SK-N-SH (cell line): ENCODE measurements at regions of chr2 and their contacts with region 1.

Region 1: GRCh38 chr2:60629801-60630385 is 76.4 kb upstream of the BCL11A start:
- DNase-seq: no peak
- H3K4me3 ChIP-seq: no peak overlapping the region
- H3K27ac ChIP-seq: no peak overlapping the region
- H3K4me1 ChIP-seq: peaks cover 0 to 6% of the 10 kb centered on the region in 2 experiments; a peak in 2 of 4 replicates
- H3K27me3 ChIP-seq: no peaks in the 10 kb centered on the region
- CTCF ChIP-seq: no peak
- EP300 ChIP-seq: no peak
- RAD21 ChIP-seq: no peak

Region 2: DNA sequence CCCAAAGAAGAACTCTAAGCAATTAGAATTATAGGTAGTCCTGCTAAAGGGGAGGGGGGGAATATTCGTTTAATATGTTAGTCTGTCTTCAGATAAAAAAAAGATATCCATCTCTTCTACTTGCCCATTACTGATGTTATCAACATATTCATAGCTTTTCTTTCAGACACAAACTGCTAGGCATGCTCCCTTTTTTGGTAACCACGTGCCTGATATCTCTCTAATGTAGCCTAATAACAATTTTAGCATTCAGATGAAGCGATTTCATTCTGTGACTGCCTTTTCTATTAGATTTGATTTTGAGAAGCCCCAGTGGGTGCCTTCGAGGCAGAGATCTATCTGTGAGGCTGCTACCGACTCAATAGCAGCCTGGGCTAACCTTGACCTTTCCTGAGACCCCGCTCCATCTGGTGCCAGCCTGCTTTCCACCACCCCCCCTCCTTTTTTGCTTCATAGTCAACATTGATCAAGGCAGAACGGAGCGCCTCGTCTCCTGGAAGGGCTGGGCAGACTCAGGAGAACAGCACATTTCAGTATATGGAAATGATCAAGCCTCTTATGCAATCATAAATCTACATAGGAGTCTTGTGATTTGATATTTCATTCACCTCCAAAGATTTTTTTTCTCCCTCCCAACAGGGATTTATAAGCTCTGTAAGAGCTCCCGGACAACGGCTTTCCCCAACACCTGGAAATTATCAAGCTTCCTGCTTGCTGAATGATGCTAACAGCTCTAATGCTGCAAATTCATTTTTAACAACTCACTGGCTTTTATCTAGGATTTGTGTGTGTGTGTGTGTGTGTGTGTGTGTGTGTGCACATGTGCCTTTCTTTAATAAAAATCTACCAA is 61.7 kb before region 1 on chr2:
- CTCF ChIA-PET with region 1: no interaction called
- POLR2A ChIA-PET with region 1: no interaction called
- DNase-seq: peak; percentile 54
- H3K4me3 ChIP-seq: no peak overlapping the region
- H3K27ac ChIP-seq: no peak overlapping the region
- H3K4me1 ChIP-seq: peaks cover 0 to 7% of the 10 kb centered on the region in 2 experiments; a peak in 2 of 4 replicates
- H3K27me3 ChIP-seq: peaks cover 41% of the 10 kb centered on the region
- CTCF ChIP-seq: no peak
- EP300 ChIP-seq: no peak
- RAD21 ChIP-seq: no peak

Region 3: DNA sequence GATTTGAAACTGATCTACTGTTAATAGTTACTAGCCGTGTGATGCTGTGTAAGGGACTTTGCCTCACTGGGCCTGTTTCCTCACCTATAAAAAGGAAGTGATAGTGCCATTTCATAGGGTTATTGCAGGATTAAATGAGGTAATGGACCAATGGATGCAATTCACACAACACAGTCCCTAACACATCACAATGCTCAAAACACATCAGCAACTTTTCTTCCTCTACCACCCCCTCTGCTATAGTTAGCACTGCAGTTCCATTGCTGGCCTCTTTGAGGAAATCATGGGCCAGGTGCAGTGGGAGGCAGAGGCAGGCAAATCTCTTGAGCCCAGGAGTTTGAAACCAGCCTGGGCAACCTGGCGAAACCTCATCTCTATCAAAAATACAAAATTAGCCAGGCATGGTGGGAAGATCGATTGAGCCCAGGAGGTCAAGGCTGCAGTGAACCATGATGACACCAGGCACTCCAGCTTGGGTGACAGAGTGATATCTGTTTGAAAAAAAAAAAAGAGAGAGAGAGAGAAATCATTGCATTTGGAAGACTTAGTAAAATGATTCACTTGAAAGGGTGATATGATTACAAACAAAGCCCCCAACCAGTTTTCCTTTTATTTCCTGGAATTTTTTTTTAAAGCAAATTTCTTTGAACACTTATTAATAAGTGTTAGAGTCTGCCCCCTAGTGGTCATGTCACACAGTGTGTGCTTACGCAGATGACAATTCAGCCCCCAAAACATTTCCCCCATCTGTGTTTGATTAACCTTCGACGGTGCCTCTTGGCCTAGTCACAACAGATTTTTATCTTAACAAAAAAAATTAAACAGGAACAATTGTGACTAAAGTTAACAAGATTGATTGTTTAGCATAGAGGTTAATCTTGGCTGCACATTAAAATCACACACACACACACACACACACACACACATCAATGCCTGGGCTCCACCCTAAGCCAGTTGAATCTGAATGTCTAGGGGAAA is 12.2 kb after region 1 on chr2:
- CTCF ChIA-PET with region 1: interaction called, 23 read pairs
- POLR2A ChIA-PET with region 1: no interaction called
- DNase-seq: peak; percentile 59
- H3K4me3 ChIP-seq: peak overlapping the region in 1 of 2 experiments; percentile 48; a peak in 1 of 4 replicates
- H3K27ac ChIP-seq: no peak overlapping the region
- H3K4me1 ChIP-seq: peaks cover 0 to 9% of the 10 kb centered on the region in 2 experiments; a peak in 2 of 4 replicates
- H3K27me3 ChIP-seq: no peaks in the 10 kb centered on the region; the same call in 1 of the 2 replicates
- CTCF ChIP-seq: peak; percentile 92
- EP300 ChIP-seq: peak in 1 of 2 experiments; percentile 57; a peak in 1 of 4 replicates
- RAD21 ChIP-seq: peak; percentile 44

Region 4: GRCh38 chr2:60756191-60757041 is 126.5 kb after region 1 on chr2 and contains the start of gene PAPOLG:
- CTCF ChIA-PET with region 1: no interaction called
- POLR2A ChIA-PET with region 1: no interaction called
- DNase-seq: peak; percentile 96
- H3K4me3 ChIP-seq: peak within 1 kb of the TSS; percentile 79
- H3K27ac ChIP-seq: peak within 1 kb of the TSS; percentile 79 to 88
- H3K4me1 ChIP-seq: peaks cover 0 to 5% of the 10 kb centered on the region in 2 experiments; a peak in 2 of 4 replicates
- H3K27me3 ChIP-seq: no peaks in the 10 kb centered on the region
- CTCF ChIP-seq: no peak
- EP300 ChIP-seq: no peak
- RAD21 ChIP-seq: no peak
- polyA plus RNA-seq, gene PAPOLG: 2.1 and 3.4 TPM in 2 replicates